HAP-1 (cell line): ENCODE measurements at regions of chr5 and their contacts with region 1.

Region 1: GRCh38 chr5:5421961-5422818 is at the start of gene ICE1:
- DNase-seq: peak; percentile 92 to 96
- H3K4me3 ChIP-seq: peak within 1 kb of the TSS; percentile 64
- H3K4me1 ChIP-seq: peaks cover 15% of the 10 kb centered on the region
- H3K27me3 ChIP-seq: no peaks in the 10 kb centered on the region

Region 2: DNA sequence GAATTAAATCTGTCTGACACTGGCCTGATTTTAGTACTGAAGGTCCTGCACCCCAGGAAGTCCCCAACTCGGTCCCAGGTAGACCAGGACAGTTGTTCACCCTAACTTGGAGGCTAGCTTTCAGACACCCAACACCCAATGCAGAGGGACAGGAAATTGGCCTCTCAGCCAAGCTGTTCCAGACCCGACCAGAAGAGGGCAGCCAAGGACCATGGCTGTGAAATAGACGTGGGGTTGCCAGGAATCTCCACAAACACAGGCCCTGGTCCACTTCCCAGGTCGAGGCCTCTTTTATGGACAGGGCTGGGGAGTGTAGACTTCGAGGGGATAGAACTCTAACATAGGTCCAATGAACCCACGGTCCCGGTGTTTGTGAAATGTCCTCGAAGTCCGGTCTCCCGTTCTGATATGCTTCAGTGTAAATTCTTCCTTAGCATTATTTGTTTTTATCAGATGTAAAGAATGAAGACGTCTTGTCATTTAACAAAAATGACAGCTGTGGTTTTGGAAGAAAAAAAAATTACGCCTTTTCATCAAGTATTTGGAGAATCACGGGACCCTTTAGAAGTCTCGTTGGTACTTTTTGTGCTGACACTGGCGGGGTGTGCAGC is 542.4 kb before region 1 on chr5:
- in situ Hi-C with region 1: loop called (anchors 10 kb)
- DNase-seq: peak; percentile 15 to 77
- H3K4me3 ChIP-seq: no peak overlapping the region
- H3K4me1 ChIP-seq: no peaks in the 10 kb centered on the region
- H3K27me3 ChIP-seq: no peaks in the 10 kb centered on the region

Region 3: DNA sequence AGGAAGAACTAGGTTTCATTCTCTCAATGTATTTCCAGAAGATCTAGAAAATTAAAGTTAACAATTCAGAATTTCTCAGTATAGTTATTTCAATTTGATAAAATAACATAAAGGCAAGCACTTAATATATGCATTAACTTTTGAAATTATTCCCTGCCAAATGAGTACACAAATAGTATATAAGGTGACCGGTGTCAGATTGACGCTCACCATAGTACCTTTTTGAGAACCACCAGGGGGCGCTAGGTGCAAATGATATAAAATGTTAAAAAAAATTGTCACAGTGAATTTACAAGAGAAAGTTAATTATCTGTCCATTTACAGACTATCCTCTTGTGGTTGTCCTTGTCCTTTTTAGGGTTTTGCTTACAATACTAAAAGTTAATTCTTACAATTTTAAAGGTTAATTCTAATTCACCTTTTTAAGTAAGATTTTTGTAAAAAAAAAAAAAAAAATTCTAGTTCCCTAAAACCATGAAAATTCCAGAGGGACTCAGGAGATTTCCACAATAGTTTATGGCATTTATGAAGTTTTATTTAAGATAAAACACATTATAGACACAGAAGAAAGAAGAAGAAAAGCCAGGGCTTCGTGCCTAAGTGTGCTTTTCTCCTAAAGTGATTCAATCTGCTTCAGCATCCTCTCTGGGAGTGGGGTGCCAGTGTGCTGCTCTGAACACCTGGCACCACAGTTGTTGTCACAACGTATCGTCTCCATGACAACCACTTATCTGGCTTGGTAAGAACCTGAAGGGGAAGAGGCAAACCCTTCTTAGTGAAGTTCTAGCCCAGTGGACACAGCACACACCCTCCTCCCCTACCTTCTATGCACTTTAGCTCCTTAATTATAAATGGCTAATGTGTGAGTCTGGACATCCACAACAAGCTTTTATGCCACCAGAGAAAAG is 280.3 kb before region 1 on chr5:
- in situ Hi-C with region 1: loop called (anchors 10 kb)
- DNase-seq: peak; percentile 41 to 65
- H3K4me3 ChIP-seq: no peak overlapping the region
- H3K4me1 ChIP-seq: no peaks in the 10 kb centered on the region
- H3K27me3 ChIP-seq: no peaks in the 10 kb centered on the region

Region 4: GRCh38 chr5:5481206-5481605 is 59.0 kb after region 1 on chr5:
- in situ Hi-C with region 1: no loop called
- DNase-seq: no peak
- H3K4me3 ChIP-seq: no peak overlapping the region
- H3K4me1 ChIP-seq: no peaks in the 10 kb centered on the region
- H3K27me3 ChIP-seq: no peaks in the 10 kb centered on the region

Region 5: GRCh38 chr5:5638211-5638610 is 216.0 kb after region 1 on chr5:
- in situ Hi-C with region 1: no loop called
- DNase-seq: no peak
- H3K4me3 ChIP-seq: no peak overlapping the region
- H3K4me1 ChIP-seq: no peaks in the 10 kb centered on the region
- H3K27me3 ChIP-seq: no peaks in the 10 kb centered on the region

Region 6: GRCh38 chr5:5919411-5919810 is 497.2 kb after region 1 on chr5:
- in situ Hi-C with region 1: no loop called
- DNase-seq: no peak
- H3K4me3 ChIP-seq: no peak overlapping the region
- H3K4me1 ChIP-seq: no peaks in the 10 kb centered on the region
- H3K27me3 ChIP-seq: no peaks in the 10 kb centered on the region